Sigmoid colon (tissue), 7 donors: ENCODE measurements at regions of chr20 and their contacts with region 1.

Region 1: GRCh38 chr20:49484180-49485140 is 2.0 kb upstream of the KCNB1 start:
- DNase-seq: peak; percentile 92
- H3K4me3 ChIP-seq: peak overlapping the region; percentile 32 to 79 (median 73)
- H3K27ac ChIP-seq: peak overlapping the region; percentile 46 to 87 (median 86)
- H3K4me1 ChIP-seq: peaks cover 0 to 51% (median 46%) of the 10 kb centered on the region in 4 donors
- H3K27me3 ChIP-seq: peaks cover 0 to 3% (median 0%) of the 10 kb centered on the region in 3 donors
- CTCF ChIP-seq: peak; percentile 75 to 90 (median 80)
- EP300 ChIP-seq: peak in 1 of 4 donors; percentile 20
- POLR2A ChIP-seq: no peak

Region 2: DNA sequence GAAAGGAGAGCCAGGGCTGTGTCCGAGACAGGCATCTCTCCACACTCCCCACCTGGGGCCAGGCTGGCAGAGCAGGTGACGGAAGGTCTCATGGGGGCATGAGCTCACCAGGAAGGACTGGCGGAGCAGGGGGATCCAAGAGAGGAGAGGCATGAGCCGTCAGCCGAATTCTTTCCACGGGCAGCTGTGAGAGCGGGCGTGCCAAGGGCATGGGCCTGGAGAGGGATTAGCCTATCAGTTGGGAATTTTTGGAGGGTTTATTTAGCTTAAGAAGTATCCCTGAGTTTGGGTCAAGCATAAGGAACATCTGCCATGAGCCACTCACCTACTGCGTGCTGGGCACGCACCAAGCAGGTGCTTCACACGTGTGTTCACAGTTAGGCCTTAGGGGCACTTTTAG is 146.4 kb before region 1 on chr20:
- intact Hi-C with region 1: loop called (anchors 1 kb)
- DNase-seq: no peak
- H3K4me3 ChIP-seq: no peak overlapping the region
- H3K27ac ChIP-seq: no peak overlapping the region
- H3K4me1 ChIP-seq: peaks cover 0 to 18% (median 11%) of the 10 kb centered on the region in 4 donors
- H3K27me3 ChIP-seq: no peaks in the 10 kb centered on the region
- CTCF ChIP-seq: no peak
- EP300 ChIP-seq: no peak
- POLR2A ChIP-seq: no peak

Region 3: GRCh38 chr20:49384437-49385088 is 99.9 kb before region 1 on chr20:
- intact Hi-C with region 1: loop called (anchors 2 kb)
- DNase-seq: peak; percentile 83
- H3K4me3 ChIP-seq: no peak overlapping the region
- H3K27ac ChIP-seq: peak overlapping the region; percentile 66 to 91 (median 82)
- H3K4me1 ChIP-seq: peaks cover 0 to 81% (median 63%) of the 10 kb centered on the region in 4 donors
- H3K27me3 ChIP-seq: no peaks in the 10 kb centered on the region
- CTCF ChIP-seq: peak in 3 of 4 experiments; percentile 49 to 68 (median 58)
- EP300 ChIP-seq: no peak
- POLR2A ChIP-seq: no peak

Region 4: DNA sequence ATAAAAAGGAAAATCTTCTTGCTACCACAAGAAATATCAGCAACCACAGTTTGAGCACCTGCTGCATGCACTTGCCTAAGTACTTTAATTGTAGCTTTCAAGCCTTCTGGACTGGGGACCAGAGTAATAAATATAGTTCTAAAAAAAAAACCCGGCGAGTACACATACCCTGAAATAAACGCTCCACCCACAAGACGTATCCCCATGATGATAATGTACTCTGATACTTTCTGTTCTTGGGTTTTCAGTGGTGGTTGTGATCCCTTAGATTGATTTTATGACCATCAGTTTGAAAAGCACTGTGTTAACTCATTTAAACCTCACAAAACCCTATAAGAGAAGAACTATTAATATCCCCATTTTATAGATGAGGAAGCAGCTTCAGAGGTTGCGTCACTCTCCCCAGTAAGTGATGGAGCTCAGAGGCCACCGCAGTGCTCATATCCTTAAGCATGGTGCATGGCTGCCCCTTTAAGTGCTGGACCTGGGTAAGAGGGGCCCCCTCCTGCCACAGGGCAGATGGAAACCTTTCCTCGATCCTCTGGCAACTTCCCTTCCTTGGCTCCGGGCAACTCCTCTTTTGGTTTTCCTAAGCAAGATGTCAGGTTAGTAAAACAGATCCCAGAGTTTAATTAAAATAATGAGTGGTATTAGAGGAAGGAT is 69.3 kb before region 1 on chr20:
- intact Hi-C with region 1: loop called (anchors 2 kb)
- DNase-seq: peak; percentile 95
- H3K4me3 ChIP-seq: no peak overlapping the region
- H3K27ac ChIP-seq: peak overlapping the region; percentile 81 to 97 (median 90)
- H3K4me1 ChIP-seq: peaks cover 0 to 98% (median 92%) of the 10 kb centered on the region in 4 donors
- H3K27me3 ChIP-seq: no peaks in the 10 kb centered on the region
- CTCF ChIP-seq: no peak
- EP300 ChIP-seq: peak; percentile 82 to 97 (median 93)
- POLR2A ChIP-seq: no peak

Region 5: DNA sequence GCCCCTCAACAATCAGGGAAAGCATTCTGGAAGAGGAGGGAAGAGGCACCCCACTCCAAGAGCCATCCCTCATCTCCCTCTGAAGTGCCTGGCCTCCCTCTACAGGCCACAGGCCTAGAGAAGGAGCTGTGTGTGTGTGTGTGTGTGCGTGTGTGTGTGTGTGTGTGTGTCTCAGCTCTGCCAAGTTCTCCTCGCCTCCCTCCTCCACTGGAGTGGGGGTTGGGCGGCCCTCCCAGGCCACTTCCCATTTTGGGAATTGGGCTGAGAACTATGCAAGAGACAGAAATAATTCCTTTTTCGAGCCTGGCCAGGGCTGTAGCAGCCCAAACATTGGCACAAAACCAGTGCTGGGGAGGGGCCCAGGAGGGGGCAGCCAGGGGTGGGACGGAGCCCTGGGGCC is 37.7 kb before region 1 on chr20:
- intact Hi-C with region 1: loop called (anchors 2 kb)
- DNase-seq: peak; percentile 96
- H3K4me3 ChIP-seq: no peak overlapping the region
- H3K27ac ChIP-seq: peak overlapping the region; percentile 83 to 92 (median 86)
- H3K4me1 ChIP-seq: peaks cover 0 to 79% (median 65%) of the 10 kb centered on the region in 4 donors
- H3K27me3 ChIP-seq: no peaks in the 10 kb centered on the region
- CTCF ChIP-seq: peak in 2 of 4 experiments; percentile 14 to 37
- EP300 ChIP-seq: peak in 3 of 4 donors; percentile 11 to 82 (median 57)
- POLR2A ChIP-seq: no peak

Region 6: GRCh38 chr20:49534255-49534712 is 49.8 kb after region 1 on chr20:
- intact Hi-C with region 1: loop called (anchors 2 kb)
- DNase-seq: no peak
- H3K4me3 ChIP-seq: no peak overlapping the region
- H3K27ac ChIP-seq: no peak overlapping the region
- H3K4me1 ChIP-seq: no peaks in the 10 kb centered on the region
- H3K27me3 ChIP-seq: no peaks in the 10 kb centered on the region
- CTCF ChIP-seq: peak; percentile 62 to 85 (median 79)
- EP300 ChIP-seq: no peak
- POLR2A ChIP-seq: no peak